T-cell (primary cell): ENCODE measurements at regions of chr7 and their contacts with region 1.

Region 1: DNA sequence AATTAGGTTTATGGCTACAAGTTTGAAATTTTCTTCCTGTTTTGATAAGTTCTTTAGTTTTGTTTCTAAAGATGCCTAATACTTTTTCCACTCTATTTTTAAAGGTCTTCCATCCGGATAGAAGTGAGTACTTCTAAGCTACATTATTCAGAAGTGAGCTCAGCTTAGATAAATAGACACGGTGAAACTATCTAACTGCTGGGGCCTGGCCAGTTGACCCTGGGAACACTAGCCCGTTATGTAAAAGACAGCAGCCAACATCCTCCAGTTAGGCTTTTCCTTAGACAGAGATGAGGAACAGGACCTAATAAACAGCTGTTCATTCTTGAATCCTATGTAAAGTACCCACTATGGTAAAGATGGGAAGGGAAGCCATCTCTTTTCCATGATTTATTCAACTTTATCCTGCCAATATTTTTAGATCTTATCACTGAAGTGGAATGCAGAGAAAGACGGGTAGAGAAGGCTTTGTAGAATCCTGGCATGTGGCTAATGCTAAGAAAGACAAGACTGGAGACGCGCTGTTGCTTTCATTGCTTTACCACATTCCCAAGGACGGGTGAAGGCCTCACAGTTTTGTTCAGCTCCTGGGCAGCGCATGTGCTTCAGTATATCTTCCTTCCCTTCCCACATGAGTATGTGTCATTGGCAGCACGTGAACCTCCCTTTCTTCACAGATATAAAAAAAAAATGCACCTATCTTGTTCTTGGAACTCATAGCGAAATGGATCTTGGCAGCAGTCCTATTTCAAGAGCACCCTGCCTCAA is 340.0 kb upstream of the MEOX2 start:
- DNase-seq: no peak
- ATAC-seq: no peak
- H3K4me3 ChIP-seq: no peak overlapping the region
- H3K4me3 Mint-ChIP-seq: no peak overlapping the region
- H3K27ac ChIP-seq: no peak overlapping the region
- H3K27ac Mint-ChIP-seq: no peak overlapping the region
- H3K4me1 ChIP-seq: no peaks in the 10 kb centered on the region
- H3K4me1 Mint-ChIP-seq: no peaks in the 10 kb centered on the region
- H3K27me3 ChIP-seq: no peaks in the 10 kb centered on the region
- H3K27me3 Mint-ChIP-seq: no peaks in the 10 kb centered on the region

Region 2: DNA sequence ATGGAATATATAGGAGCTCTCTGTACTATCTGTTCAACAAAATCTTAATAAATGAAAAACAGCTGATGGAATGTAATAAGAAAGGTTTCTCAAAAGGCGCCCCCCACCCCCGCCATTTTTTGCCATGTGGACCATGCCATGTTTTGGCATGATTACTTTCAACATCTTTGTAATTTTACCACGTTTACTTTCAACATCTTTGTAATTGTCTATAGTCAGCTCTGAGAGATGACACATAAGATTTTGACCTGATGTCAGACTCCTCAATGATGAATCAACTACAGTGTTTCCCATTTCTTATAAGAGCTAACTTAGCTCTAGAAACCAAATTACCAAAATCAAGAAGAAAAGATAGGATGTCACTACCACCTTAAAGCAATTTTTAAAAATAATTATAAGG is 1127.1 kb after region 1 on chr7:
- CTCF ChIA-PET with region 1: no interaction called
- POLR2A ChIA-PET with region 1: interaction called in 1 of 2 experiments, 10 read pairs
- DNase-seq: no peak
- ATAC-seq: no peak
- H3K4me3 ChIP-seq: no peak overlapping the region
- H3K4me3 Mint-ChIP-seq: no peak overlapping the region
- H3K27ac ChIP-seq: no peak overlapping the region
- H3K27ac Mint-ChIP-seq: no peak overlapping the region
- H3K4me1 ChIP-seq: no peaks in the 10 kb centered on the region
- H3K4me1 Mint-ChIP-seq: peaks cover 0 to 17% (median 16%) of the 10 kb centered on the region in 3 donors
- H3K27me3 ChIP-seq: no peaks in the 10 kb centered on the region
- H3K27me3 Mint-ChIP-seq: no peaks in the 10 kb centered on the region